SK-MEL-5 (cell line): ENCODE measurements at regions of chr13 and their contacts with region 1.

Region 1: DNA sequence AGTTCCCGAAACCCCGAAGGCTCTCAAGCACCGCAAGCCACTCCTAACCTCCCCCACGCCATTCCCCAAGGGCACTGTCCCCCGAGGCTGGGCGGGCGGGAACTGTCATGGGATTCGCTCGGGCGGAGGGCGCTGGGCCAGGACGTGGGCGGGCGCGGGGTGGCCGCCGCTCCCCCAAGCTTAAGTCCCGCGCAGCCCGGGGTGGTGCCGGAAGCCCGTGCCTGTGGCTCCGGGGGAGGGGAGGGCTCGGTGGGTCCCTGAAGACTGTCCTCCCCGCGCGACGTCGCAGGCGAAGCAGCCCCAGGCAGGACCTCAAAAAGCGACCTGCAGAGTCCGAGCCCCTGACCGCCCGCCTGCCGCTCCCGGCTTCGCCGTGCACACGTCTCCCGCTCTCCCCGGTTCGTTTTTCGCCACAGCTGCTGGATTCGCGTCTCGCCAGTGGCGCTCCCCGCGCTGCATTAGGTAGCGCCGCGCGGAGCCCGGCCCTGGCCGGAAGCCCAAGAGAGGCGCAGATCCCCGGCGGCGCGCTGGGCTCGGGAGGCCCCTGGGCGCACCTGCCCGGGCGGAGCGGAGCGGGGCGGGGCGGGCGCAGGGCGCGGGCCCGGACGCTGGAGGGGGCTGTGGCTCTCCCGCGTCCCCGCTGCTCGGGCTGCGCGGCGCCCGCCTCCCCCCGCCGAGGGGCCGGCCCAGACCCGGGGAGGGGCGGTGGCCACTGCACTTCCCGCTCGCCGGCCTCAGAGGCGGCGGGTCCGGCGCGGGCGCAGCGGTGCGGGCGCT is at the start of gene FARP1:
- DNase-seq: peak; percentile 70
- total RNA-seq, gene FARP1: 39.8 and 49.0 TPM in 2 replicates

Region 2: GRCh38 chr13:98405107-98405571 is 262.6 kb after region 1 on chr13:
- in situ Hi-C with region 1: loop called (anchors 25 kb)
- DNase-seq: no peak